Activated CD4-positive, alpha-beta memory T cell treated with anti-CD3 and anti-CD28 coated beads for 36 hours (primary cell): ENCODE measurements at regions of chr4 and their contacts with region 1.

Region 1: DNA sequence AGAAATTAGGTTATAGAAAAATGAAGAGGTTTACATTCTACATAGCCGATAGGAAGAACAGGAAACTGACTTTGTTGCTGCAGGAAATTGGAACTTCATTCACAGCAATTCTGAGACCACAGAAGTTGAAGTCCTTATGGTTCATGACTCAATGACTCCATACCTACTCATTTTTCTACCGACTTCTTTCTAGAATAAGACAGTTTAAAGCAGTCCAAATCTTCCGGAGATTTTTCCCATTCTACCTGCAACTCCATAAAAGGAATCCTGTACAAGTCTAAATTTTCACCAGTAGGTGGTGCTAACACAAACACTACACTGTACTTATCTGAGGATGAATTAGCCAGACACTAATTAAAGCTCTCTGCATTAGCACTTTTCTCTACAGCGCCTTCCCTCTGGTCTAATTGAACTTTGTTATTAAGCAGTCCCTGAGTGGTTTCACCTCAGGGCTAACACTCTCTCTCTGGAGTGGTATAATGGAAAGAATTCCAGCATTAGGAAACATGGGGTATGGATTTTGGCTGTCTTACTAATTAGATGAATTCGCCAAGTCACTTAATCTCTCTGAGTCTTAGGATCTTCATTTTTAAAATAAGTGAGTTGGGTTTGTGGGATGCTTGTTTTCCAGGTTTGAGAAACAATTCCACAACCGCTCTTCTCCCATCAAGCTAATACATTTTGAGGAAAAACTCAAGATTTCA is 167.9 kb downstream of the SMIM20 start:
- DNase-seq: no peak
- H3K4me3 Mint-ChIP-seq: peak overlapping the region; percentile 1
- H3K27ac Mint-ChIP-seq: peak overlapping the region; percentile 90
- H3K4me1 Mint-ChIP-seq: peaks cover 88% of the 10 kb centered on the region
- H3K27me3 Mint-ChIP-seq: no peaks in the 10 kb centered on the region

Region 2: GRCh38 chr4:26878794-26879391 is 796.9 kb after region 1 on chr4:
- CTCF ChIA-PET with region 1: no interaction called
- POLR2A ChIA-PET with region 1: no interaction called
- intact Hi-C with region 1: loop called (anchors 5 kb)
- DNase-seq: peak; percentile 47
- H3K4me3 Mint-ChIP-seq: peak overlapping the region; percentile 60
- H3K27ac Mint-ChIP-seq: peak overlapping the region; percentile 99
- H3K4me1 Mint-ChIP-seq: peaks cover 73% of the 10 kb centered on the region
- H3K27me3 Mint-ChIP-seq: no peaks in the 10 kb centered on the region